WTC11 (cell line): ENCODE measurements at regions of chr6 and their contacts with region 1.

Region 1: GRCh38 chr6:44201638-44202303 is 15.0 kb upstream of the MYMX start:
- DNase-seq: no peak
- ATAC-seq: no peak
- H3K4me3 Mint-ChIP-seq: no peak overlapping the region
- H3K27ac Mint-ChIP-seq: peak overlapping the region; percentile 100
- H3K4me1 Mint-ChIP-seq: peaks cover 53% of the 10 kb centered on the region
- H3K27me3 Mint-ChIP-seq: no peaks in the 10 kb centered on the region; the same call in 1 of the 2 replicates
- CTCF ChIP-seq: no peak

Region 2: DNA sequence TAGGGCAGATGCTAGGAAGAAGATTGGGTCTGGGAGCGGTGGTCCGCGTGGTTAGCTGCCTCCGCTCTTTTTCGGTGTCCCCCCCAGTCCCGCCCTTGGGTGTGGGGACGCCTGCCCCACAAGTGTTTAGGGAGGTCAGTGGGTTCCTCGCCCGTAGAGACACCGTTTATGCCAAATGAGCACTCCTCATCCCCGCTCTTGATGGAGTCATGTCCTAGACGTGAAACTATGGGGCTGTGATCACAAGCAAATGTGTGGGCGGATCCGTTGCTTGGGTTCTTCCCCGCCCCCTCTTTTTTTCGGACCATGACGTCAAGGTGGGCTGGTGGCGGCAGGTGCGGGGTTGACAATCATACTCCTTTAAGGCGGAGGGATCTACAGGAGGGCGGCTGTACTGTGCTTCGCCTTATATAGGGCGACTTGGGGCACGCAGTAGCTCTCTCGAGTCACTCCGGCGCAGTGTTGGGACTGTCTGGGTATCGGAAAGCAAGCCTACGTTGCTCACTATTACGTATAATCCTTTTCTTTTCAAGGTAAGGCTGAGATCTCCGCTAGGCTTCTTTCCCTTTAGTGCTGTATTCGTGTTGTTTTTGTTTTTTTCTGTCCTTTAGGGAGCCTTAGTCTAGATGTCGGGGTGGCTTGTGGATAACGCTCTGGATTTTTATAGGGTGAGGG is 45.0 kb after region 1 on chr6 and contains the start of gene HSP90AB1:
- CTCF ChIA-PET with region 1: interaction called, 3 read pairs
- POLR2A ChIA-PET with region 1: interaction called, 11 read pairs
- DNase-seq: peak; percentile 93
- ATAC-seq: peak; percentile 59
- H3K4me3 Mint-ChIP-seq: peak within 1 kb of the TSS; percentile 99
- H3K27ac Mint-ChIP-seq: peak within 1 kb of the TSS; percentile 99
- H3K4me1 Mint-ChIP-seq: peaks cover 37% of the 10 kb centered on the region
- H3K27me3 Mint-ChIP-seq: peaks cover 10% of the 10 kb centered on the region
- CTCF ChIP-seq: no peak
- total RNA-seq, gene HSP90AB1: 2,159 to 2,172 TPM (median 2,171 TPM) in 3 replicates

Region 3: DNA sequence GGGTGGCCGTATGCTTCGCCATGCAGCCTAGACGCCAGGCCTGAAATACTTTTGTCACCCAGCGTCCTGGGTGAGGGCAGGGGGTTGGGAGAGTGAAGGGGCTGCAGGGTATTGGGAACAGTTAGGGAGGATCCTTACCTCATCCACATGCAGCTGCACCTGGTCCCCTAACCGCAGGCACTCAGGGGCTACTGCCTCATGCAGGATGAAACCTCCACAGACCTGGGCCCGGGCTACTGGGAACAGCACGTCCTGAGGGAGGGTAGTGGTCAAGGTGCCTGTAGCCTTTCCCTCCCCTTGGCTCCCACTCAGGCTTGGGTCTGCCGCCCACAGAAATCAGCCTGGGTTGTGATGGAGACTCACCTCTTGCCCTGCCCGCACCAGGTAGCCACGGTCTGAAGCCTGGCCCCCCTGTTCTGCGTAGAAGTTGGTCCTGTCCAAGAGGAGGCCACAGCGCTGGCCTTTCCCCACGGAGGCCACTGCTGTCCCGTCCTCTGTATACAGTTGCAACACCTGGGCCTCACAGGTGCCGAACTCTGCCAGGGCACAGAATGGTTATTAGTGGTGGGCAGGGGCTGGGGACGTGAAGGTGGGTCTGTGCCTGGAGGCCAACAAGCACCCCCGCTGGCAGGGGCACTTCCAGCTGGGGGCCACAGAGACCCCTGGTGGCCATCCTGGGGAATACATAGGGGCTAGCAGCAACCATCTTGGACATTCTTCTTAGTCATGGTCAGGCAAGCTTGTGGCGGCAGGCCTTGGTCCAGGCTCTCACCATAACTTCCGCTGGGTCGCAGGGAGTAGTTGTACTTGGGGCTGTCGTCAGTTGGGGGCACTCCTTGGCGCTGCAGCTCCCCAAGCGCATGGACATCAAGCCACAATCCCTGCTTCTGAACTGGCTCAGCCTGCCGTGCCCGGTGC is 102.8 kb after region 1 on chr6:
- CTCF ChIA-PET with region 1: no interaction called
- POLR2A ChIA-PET with region 1: no interaction called
- DNase-seq: peak; percentile 66
- ATAC-seq: peak; percentile 88
- H3K4me3 Mint-ChIP-seq: no peak overlapping the region
- H3K27ac Mint-ChIP-seq: no peak overlapping the region; the same call in 1 of the 2 replicates
- H3K4me1 Mint-ChIP-seq: no peaks in the 10 kb centered on the region
- H3K27me3 Mint-ChIP-seq: no peaks in the 10 kb centered on the region
- CTCF ChIP-seq: peak; percentile 88